ENCODE measurements at regions of chr12 and their contacts with region 1.

Region 1: DNA sequence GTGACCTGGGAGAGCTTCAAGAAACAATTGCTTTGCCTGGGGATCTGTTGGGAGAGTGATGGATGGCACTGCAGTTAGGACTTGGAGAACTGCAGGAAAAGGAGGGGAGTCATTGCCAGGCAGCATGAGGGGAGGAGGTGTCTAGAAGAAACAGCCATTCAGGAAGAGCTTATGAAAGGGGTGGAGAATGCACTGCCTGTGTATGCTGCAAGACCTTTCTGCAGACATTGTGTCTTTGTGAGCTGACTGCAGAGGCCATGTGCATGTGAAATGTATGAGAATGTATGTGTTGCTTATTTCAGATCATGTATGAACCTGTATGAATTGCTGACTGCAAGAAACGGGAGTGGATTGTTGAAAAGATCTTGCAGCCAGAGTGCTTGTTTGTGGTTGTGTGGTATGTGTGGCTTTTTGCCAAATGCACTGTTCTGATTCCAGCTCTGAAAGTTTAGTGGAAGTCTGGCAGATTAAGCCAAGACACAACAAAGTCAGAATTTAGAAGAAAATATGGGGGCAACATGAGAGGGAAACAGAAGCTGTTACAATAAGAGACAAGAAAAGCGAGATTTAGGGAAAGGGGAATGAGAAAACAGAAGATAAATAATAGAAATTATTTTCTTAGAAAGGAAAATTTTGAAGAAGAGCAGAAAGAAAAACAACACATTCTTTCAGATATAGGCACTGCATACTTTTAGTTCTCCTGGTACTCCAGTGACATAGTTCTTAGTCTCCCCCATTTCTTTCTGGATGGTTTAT is 9.8 kb upstream of the RIMKLB start:
- DNase-seq: peak; percentile 51 to 60
- H3K4me3 ChIP-seq: no peak overlapping the region
- H3K27ac ChIP-seq: peak overlapping the region; percentile 7 to 56 (median 46)
- H3K4me1 ChIP-seq: peaks cover 17 to 33% of the 10 kb centered on the region in 2 donors
- H3K27me3 ChIP-seq: no peaks in the 10 kb centered on the region
- CTCF ChIP-seq: no peak
- POLR2A ChIP-seq: no peak

Region 2: GRCh38 chr12:8823565-8824300 is 135.7 kb after region 1 on chr12:
- intact Hi-C with region 1: loop called (anchors 2 kb)
- DNase-seq: peak; percentile 29 to 36
- H3K4me3 ChIP-seq: no peak overlapping the region
- H3K27ac ChIP-seq: peak overlapping the region in 1 of 3 donors; percentile 41
- H3K4me1 ChIP-seq: peaks cover 0 to 5% of the 10 kb centered on the region in 2 donors
- H3K27me3 ChIP-seq: no peaks in the 10 kb centered on the region
- CTCF ChIP-seq: peak in 4 of 6 experiments; percentile 55 to 73 (median 62)
- POLR2A ChIP-seq: no peak

Region 3: DNA sequence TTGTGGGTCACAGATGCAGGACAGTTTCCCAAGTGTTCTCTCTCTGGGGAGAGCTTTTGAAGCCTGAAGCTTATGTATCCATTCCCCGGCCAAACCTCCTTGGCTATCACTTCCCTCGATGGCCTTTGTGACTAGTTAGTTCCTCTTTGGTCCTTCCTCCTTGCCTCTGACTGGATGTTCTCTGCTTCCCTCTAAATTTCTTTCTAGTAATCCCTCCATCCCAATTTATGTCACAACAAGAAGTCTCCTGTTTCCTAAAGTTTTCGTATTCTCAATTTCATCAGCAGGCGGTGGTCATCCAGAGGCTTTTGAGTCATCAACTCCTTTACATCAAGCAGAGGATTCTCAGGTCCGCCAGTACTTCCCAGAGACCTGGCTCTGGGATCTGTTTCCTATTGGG is 161.9 kb after region 1 on chr12:
- intact Hi-C with region 1: loop called (anchors 10 kb)
- DNase-seq: no peak
- H3K4me3 ChIP-seq: no peak overlapping the region
- H3K27ac ChIP-seq: no peak overlapping the region
- H3K4me1 ChIP-seq: peaks cover 0 to 2% of the 10 kb centered on the region in 2 donors
- H3K27me3 ChIP-seq: no peaks in the 10 kb centered on the region
- CTCF ChIP-seq: no peak
- POLR2A ChIP-seq: no peak